Activated naive CD4-positive, alpha-beta T cell treated with anti-CD3 and anti-CD28 coated beads for 36 hours (primary cell): ENCODE measurements at regions of chr9 and their contacts with region 1.

Region 1: GRCh38 chr9:7935681-7936080 is 136.1 kb upstream of the DMAC1 start:
- DNase-seq: no peak
- H3K4me3 Mint-ChIP-seq: peak overlapping the region; percentile 31
- H3K27ac Mint-ChIP-seq: peak overlapping the region; percentile 68
- H3K4me1 Mint-ChIP-seq: peaks cover 24% of the 10 kb centered on the region
- H3K27me3 Mint-ChIP-seq: no peaks in the 10 kb centered on the region

Region 2: DNA sequence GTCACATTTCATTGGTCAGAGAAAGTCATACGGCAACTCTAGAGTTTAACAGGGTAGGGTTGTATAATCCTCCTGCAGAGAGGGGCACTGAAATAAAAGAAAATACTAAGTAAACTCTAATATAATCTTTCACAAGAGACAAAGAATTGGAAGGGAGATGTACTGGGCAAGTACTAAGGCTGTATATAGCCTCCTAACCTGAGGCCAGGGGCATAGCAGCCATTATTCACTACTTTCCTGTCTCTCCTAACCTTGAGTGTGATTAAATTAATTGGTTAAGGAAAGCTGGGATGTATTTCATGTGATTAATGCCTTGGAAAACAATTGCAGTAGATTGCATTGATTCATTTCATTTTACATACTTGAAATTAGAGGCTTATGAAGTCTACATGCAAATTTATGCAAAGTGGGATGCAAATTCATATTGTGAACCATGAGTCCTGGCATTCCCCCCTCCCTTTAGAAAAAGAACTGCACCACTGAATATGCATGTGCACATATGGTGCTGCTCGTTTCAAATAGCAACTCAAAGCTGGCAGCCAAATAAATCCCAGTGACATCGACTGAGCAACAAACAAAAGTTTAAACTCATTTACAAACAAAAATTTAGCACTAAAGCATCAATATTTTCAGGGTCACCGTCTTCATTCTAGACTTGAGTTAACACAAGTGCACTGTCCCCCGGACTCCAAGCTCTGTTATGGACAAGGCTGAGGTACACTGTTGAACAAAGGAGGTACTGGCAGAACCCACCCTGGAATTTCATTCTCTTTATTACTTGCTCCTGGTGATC is 206.1 kb before region 1 on chr9:
- CTCF ChIA-PET with region 1: no interaction called
- intact Hi-C with region 1: no loop called
- DNase-seq: no peak
- H3K4me3 Mint-ChIP-seq: no peak overlapping the region
- H3K27ac Mint-ChIP-seq: no peak overlapping the region
- H3K4me1 Mint-ChIP-seq: peaks cover 2% of the 10 kb centered on the region
- H3K27me3 Mint-ChIP-seq: no peaks in the 10 kb centered on the region

Region 3: GRCh38 chr9:7811677-7812076 is 124.0 kb before region 1 on chr9:
- CTCF ChIA-PET with region 1: no interaction called
- intact Hi-C with region 1: no loop called
- DNase-seq: no peak
- H3K4me3 Mint-ChIP-seq: no peak overlapping the region
- H3K27ac Mint-ChIP-seq: no peak overlapping the region
- H3K4me1 Mint-ChIP-seq: no peaks in the 10 kb centered on the region
- H3K27me3 Mint-ChIP-seq: no peaks in the 10 kb centered on the region

Region 4: GRCh38 chr9:7879551-7880245 is 56.0 kb before region 1 on chr9:
- CTCF ChIA-PET with region 1: no interaction called
- intact Hi-C with region 1: loop called (anchors 2 kb)
- DNase-seq: peak; percentile 68
- H3K4me3 Mint-ChIP-seq: no peak overlapping the region
- H3K27ac Mint-ChIP-seq: no peak overlapping the region
- H3K4me1 Mint-ChIP-seq: peaks cover 5% of the 10 kb centered on the region
- H3K27me3 Mint-ChIP-seq: no peaks in the 10 kb centered on the region

Region 5: DNA sequence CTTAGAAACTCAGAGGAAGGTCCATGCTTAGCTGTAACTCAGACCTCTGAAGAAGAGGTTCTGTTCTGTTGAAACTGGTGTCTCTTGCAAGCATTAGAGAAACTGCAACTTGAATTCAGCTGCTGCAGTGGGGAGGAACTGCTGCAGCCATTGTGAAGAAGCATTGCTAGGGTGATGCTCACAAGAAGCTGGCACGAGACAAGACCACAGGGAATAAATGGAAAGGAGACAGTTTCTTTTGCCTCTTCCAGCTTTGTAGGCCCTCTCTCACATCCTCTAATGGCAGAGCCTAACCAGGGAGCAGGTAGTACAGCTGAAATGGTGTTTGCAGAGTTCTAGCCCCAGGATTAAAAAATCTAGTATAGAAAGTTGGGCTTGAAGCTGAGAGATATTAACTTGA is 11.9 kb after region 1 on chr9:
- CTCF ChIA-PET with region 1: no interaction called
- intact Hi-C with region 1: loop called (anchors 1 kb)
- DNase-seq: no peak
- H3K4me3 Mint-ChIP-seq: no peak overlapping the region
- H3K27ac Mint-ChIP-seq: no peak overlapping the region
- H3K4me1 Mint-ChIP-seq: peaks cover 6% of the 10 kb centered on the region
- H3K27me3 Mint-ChIP-seq: no peaks in the 10 kb centered on the region